HCT116 (cell line): ENCODE measurements at regions of chr7 and their contacts with region 1.

Region 1: DNA sequence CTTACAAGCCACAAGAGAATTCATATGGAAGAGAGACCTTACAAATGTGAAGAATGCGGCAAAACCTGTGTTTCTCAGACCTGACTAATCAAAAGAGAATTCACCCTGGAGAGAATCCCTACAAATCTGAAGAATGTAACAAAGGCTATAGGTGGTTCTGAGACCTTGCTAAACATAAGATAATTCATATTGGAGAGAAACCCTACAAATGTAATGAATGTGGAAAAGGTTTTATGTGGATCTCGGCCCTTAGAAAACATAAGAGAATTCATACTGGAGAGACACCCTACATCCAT is 33.4 kb downstream of the ZNF727 start:
- DNase-seq: no peak
- ATAC-seq: no peak
- H3K4me3 ChIP-seq: no peak overlapping the region
- H3K27ac ChIP-seq: no peak overlapping the region
- H3K4me1 ChIP-seq: no peaks in the 10 kb centered on the region
- H3K27me3 ChIP-seq: no peaks in the 10 kb centered on the region
- CTCF ChIP-seq: no peak
- POLR2A ChIP-seq: no peak
- RAD21 ChIP-seq: no peak

Region 2: DNA sequence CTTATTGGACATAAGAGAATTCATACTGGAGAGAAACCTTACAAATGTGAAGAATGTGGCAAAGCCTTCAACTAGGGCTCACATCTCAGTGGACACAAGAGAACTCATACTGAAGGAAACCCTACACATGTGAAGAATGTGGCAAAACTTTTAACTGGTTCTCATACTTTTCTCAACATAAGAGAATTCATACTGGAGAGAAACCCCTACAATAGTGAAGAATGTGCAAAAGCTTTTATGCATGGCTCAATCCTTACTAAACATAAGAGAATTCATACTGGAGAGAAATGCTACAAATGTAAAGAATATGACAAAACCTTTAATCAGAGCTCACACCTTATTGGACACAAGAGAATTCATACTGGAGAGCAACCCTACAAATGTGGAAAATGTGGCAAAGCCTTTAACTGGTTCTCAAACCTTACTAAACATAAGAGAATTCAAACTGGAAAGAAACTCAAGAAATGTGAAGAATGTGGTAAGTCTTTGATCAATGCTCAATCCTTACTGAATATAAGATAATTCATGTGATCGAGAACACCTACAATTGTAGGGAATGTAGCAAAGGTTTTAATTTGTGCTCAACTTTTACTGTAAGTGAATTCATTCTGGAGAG is 201.8 kb before region 1 on chr7:
- CTCF ChIA-PET with region 1: no interaction called
- POLR2A ChIA-PET with region 1: no interaction called
- RAD21 ChIA-PET with region 1: no interaction called
- intact Hi-C with region 1: loop called (anchors 10 kb)
- DNase-seq: no peak
- ATAC-seq: no peak
- H3K4me3 ChIP-seq: no peak overlapping the region
- H3K27ac ChIP-seq: no peak overlapping the region
- H3K4me1 ChIP-seq: no peaks in the 10 kb centered on the region
- H3K27me3 ChIP-seq: no peaks in the 10 kb centered on the region
- CTCF ChIP-seq: no peak
- POLR2A ChIP-seq: no peak
- RAD21 ChIP-seq: no peak